Psoas muscle (tissue), 8 donors: ENCODE measurements at regions of chr1 and their contacts with region 1.

Region 1: GRCh38 chr1:160085686-160086455 is 4.5 kb downstream of the KCNJ9 start:
- DNase-seq: peak; percentile 84 to 91
- ATAC-seq: peak; percentile 79 to 92 (median 82)
- H3K4me3 ChIP-seq: no peak overlapping the region
- H3K27ac ChIP-seq: peak overlapping the region; percentile 27
- H3K4me1 ChIP-seq: no peaks in the 10 kb centered on the region
- H3K27me3 ChIP-seq: peaks cover 0 to 21% (median 0%) of the 10 kb centered on the region in 3 donors
- CTCF ChIP-seq: peak; percentile 88

Region 2: GRCh38 chr1:160046494-160047110 is 39.3 kb before region 1 on chr1:
- intact Hi-C with region 1: loop called in 1 of 2 experiments (anchors 5 kb)
- DNase-seq: peak; percentile 57 to 72
- ATAC-seq: peak; percentile 62 to 86 (median 76)
- H3K4me3 ChIP-seq: no peak overlapping the region
- H3K27ac ChIP-seq: no peak overlapping the region
- H3K4me1 ChIP-seq: no peaks in the 10 kb centered on the region
- H3K27me3 ChIP-seq: no peaks in the 10 kb centered on the region
- CTCF ChIP-seq: peak; percentile 50

Region 3: GRCh38 chr1:160117709-160118183 is 31.9 kb after region 1 on chr1:
- intact Hi-C with region 1: no loop called
- DNase-seq: peak in 1 of 2 donors; percentile 86
- ATAC-seq: peak; percentile 28 to 59 (median 50)
- H3K4me3 ChIP-seq: peak overlapping the region; percentile 82
- H3K27ac ChIP-seq: peak overlapping the region; percentile 98
- H3K4me1 ChIP-seq: peaks cover 68% of the 10 kb centered on the region
- H3K27me3 ChIP-seq: no peaks in the 10 kb centered on the region
- CTCF ChIP-seq: no peak

Region 4: DNA sequence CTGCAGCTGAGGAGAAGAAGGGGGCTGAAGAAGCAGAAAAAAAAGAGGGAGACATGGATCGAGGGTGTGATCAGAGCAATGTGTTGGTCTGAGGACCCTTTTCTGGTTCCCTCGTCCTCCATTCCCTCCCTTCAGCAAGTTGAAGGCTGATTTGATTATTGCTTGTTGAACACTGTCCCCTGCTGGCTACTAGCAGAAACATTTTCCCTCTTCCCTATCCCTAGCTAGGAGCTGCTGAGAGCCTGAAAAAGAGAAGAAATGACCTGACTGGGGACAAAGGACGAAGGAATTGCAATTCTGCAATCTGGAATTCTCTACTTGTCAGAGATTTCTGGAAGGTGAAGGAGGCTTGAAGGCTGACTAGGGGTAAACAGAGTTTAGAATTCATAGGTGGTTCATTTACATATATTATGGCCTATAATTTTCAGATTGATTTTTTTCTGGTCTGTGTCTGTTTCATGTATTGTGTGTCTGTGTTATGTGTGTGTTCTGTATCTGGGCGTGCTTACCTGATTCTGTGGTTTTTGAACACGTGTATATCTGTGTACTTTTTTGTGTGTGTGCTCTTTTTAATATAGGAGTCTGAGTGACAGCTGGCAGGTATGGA is 290.8 kb after region 1 on chr1:
- intact Hi-C with region 1: loop called in 1 of 2 experiments (anchors 10 kb)
- DNase-seq: no peak
- ATAC-seq: peak; percentile 78 to 97 (median 88)
- H3K4me3 ChIP-seq: no peak overlapping the region
- H3K27ac ChIP-seq: peak overlapping the region; percentile 7
- H3K4me1 ChIP-seq: peaks cover 4% of the 10 kb centered on the region
- H3K27me3 ChIP-seq: no peaks in the 10 kb centered on the region
- CTCF ChIP-seq: peak; percentile 90